Esophagus squamous epithelium (tissue), 5 donors: ENCODE measurements at regions of chr7 and their contacts with region 1.

Region 1: GRCh38 chr7:54426406-54426805 is 115.8 kb upstream of the VSTM2A start:
- DNase-seq: no peak
- H3K4me3 ChIP-seq: no peak overlapping the region
- H3K27ac ChIP-seq: no peak overlapping the region
- H3K4me1 ChIP-seq: no peaks in the 10 kb centered on the region
- H3K27me3 ChIP-seq: no peaks in the 10 kb centered on the region
- CTCF ChIP-seq: no peak
- POLR2A ChIP-seq: no peak

Region 2: DNA sequence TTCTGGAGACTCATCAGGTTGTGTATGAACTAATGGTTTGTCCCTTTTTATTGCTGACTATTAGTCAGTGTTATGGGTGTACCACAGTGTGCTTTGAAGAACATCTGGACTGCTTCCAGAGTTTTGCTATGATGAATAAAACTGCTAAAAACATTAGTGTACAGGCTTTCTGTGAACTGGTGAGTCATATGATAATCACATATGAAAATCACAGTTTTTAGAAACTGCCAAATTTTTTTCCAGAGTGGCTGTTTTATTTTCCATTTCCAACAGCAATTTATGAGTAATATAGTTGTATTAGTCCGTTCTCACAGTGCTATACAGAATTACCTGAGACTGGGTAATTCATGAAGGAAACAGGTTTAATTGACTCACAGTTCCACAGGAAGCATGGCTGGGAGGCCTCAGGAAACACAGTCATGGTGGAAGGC is 165.4 kb before region 1 on chr7:
- intact Hi-C with region 1: no loop called
- DNase-seq: no peak
- H3K4me3 ChIP-seq: no peak overlapping the region
- H3K27ac ChIP-seq: no peak overlapping the region
- H3K4me1 ChIP-seq: no peaks in the 10 kb centered on the region
- H3K27me3 ChIP-seq: no peaks in the 10 kb centered on the region
- CTCF ChIP-seq: no peak
- POLR2A ChIP-seq: no peak

Region 3: GRCh38 chr7:54483523-54483922 is 57.1 kb after region 1 on chr7:
- intact Hi-C with region 1: loop called (anchors 10 kb)
- DNase-seq: no peak
- H3K4me3 ChIP-seq: no peak overlapping the region
- H3K27ac ChIP-seq: no peak overlapping the region
- H3K4me1 ChIP-seq: no peaks in the 10 kb centered on the region
- H3K27me3 ChIP-seq: no peaks in the 10 kb centered on the region
- CTCF ChIP-seq: no peak
- POLR2A ChIP-seq: no peak